A549 (cell line): ENCODE measurements at regions of chr7 and their contacts with region 1.

Region 1: GRCh38 chr7:43260980-43261878 is 148.8 kb downstream of the HECW1 start:
- DNase-seq: peak; percentile 51 to 89
- ATAC-seq: peak; percentile 93 to 98
- H3K4me3 ChIP-seq: no peak overlapping the region
- H3K27ac ChIP-seq: no peak overlapping the region
- H3K4me1 ChIP-seq: no peaks in the 10 kb centered on the region
- CTCF ChIP-seq: peak; percentile 84
- EP300 ChIP-seq: no peak
- POLR2A ChIP-seq: no peak
- RAD21 ChIP-seq: peak; percentile 84 to 90

Region 2: DNA sequence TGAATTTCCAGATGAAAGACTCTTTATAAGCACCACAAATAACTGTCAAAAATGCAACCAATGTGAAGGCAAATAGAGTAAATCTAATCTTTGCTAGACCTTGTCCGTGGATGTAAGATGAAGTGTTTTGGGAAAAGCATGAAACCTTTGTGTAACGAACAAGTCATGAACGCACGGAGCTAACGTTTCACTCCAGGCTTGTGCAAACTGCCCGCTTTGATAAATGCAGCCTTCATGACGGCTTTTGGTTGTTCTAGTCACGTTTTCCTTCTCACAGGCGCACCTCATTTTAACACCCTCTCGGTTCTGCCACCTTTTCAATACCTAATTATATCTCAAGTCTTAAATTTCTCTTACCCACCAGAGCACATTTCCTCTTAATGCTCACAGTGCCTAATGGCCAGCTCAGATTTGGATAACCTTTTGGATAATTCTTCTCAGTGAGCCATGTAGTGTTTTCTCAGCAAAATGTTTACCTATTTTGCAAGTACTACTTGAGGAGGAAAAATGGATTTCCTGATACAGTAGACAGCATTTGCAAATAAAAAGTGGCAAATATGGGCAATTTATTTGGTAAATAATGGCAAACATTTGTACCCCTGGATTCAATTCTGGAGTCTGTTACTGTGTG is 85.5 kb before region 1 on chr7:
- CTCF ChIA-PET with region 1: no interaction called
- POLR2A ChIA-PET with region 1: no interaction called
- DNase-seq: no peak
- ATAC-seq: no peak
- H3K4me3 ChIP-seq: no peak overlapping the region
- H3K27ac ChIP-seq: no peak overlapping the region
- H3K4me1 ChIP-seq: no peaks in the 10 kb centered on the region
- CTCF ChIP-seq: no peak
- EP300 ChIP-seq: no peak
- POLR2A ChIP-seq: no peak
- RAD21 ChIP-seq: no peak

Region 3: GRCh38 chr7:43248961-43249822 is 12.0 kb before region 1 on chr7:
- CTCF ChIA-PET with region 1: interaction called, 31 read pairs
- POLR2A ChIA-PET with region 1: no interaction called
- DNase-seq: peak; percentile 86
- ATAC-seq: peak; percentile 96 to 97
- H3K4me3 ChIP-seq: peak overlapping the region; percentile 53
- H3K27ac ChIP-seq: peak overlapping the region; percentile 84 to 86
- H3K4me1 ChIP-seq: peaks cover 19% of the 10 kb centered on the region
- CTCF ChIP-seq: no peak
- EP300 ChIP-seq: no peak
- POLR2A ChIP-seq: peak; percentile 54; the same call in 1 of the 2 replicates
- RAD21 ChIP-seq: no peak

Region 4: DNA sequence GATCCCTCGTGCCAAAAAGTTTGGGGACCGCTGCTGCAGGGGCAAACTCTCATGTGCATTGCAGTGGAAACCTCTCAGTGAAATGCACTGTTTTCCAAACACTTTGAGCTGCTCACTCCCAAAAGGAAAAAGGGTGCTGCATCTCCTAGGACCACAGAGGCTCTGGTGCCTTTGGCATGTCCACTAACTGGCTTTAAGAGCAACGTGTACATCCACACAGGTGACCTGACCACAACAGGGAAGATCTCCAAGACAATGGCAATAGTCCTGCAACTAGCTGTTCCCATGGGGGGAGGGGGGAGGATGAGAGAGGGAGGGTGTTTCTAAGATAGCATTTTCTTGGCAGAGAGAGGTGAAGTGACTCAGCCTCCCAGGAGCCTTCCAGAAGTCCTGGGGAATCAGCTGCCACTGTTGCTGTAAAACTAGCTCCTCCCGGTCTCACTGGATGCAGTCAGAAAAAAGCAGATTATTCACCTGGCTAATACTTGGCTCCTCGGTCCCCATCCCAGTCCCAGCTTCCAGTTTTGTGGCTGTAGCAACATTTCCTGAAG is 32.9 kb after region 1 on chr7:
- CTCF ChIA-PET with region 1: interaction called, 11 read pairs
- POLR2A ChIA-PET with region 1: no interaction called
- DNase-seq: peak; percentile 21 to 42
- ATAC-seq: peak; percentile 84 to 89
- H3K4me3 ChIP-seq: no peak overlapping the region
- H3K27ac ChIP-seq: 0 out of 6 replicates have a peak overlapping the region, but pooled peaks of 1 of the 2 experiments have one; percentile 35
- H3K4me1 ChIP-seq: peaks cover 7% of the 10 kb centered on the region
- CTCF ChIP-seq: no peak
- EP300 ChIP-seq: no peak
- POLR2A ChIP-seq: no peak
- RAD21 ChIP-seq: no peak

Region 5: DNA sequence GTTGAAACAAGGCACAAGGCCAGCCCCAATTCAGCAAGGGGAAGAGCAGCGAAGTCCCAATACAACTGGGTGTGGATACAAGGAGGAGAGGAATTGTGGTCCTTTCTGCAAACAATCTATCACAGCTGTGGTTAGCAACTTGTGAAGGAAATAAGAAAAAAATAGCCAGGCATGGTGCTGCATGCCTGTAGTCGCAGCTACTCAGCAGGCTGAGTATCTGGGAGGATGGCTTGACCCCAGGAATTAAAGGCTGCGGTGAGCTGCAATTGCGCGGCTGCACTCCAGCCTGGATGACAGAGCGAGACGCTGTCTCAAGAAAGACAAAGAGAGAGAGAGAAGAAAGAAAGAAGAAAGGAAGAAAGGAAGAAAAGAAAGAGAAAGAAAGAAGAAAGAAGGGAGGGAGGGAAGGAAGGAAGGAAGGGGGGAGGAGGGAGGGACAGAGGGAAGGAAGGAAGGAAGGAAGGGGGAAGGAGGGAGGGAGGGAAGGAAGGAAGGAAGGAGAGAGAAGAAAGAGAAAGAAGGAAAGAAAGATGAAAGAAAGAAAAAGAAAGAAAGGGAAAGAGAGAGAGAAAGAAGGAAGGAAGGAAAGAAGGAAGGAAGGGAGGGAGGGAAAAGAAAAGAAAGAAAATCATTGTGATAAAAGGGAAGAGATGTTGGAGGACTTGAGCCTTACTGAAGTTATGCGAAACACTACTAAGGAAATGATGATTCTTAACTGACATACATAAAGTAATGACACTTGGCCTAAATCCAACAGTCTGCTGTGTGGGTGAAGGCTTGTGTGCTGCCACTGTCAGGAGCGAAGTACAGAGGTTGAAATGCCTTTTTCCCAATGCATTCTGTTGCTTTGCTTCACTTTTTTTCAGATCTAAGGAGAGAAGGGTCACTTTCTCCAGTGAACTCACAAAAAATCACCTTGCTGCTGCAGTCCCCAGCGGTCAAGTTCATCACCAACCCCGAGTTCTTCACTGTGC is 204.6 kb after region 1 on chr7:
- CTCF ChIA-PET with region 1: no interaction called
- POLR2A ChIA-PET with region 1: no interaction called
- DNase-seq: no peak
- ATAC-seq: no peak
- H3K4me3 ChIP-seq: no peak overlapping the region
- H3K27ac ChIP-seq: no peak overlapping the region
- H3K4me1 ChIP-seq: no peaks in the 10 kb centered on the region
- CTCF ChIP-seq: no peak
- EP300 ChIP-seq: no peak
- POLR2A ChIP-seq: no peak
- RAD21 ChIP-seq: no peak